SK-N-SH (cell line): ENCODE measurements at regions of chr22 and their contacts with region 1.

Region 1: DNA sequence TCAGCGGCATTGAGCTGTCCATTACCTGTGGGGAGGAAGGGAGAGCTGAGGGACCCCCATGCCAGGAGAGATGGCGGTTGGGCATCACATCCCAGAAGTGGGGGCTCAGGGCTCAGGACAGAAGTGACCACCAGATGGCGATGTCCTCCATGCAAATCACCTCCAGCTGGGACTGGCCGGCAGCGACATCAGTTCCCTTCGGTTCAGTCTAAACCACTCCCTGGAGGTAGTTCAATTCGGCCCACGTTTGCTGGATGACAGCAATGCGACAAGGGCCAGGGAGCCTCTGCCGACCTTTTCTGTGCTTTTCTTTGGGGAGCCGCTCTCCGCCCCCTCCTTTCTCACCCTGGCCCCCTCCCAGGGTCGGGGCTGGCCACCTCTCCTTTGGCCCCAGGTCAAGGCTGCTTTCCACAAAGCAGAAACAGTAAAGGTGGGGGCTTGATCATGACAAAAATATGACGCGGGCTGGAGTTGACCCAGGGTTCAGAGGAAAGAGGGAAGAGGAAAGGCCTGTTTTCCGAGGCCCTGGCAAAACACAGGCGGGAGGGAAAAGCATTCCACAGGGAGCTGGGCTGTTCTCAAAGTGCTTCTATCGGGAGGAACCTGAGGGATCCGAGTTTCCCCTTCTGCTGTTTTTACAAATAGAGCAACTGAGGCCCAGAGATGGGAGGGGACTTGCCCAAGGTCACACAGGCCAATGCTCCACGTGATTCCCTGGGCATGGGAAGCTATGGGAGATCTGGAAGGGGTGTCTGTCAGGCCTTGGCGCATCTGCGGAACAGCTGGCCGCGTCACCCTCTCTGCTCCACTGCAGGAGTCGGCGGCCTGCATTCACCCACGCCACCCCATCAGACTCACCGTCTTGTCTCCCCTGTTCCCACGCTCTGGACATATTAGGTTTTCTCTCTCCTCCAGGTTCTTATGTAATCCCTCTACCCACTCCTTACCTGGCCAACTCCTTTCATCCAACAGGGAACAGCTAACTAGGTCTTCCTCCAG is 54.7 kb downstream of the FBXO7 start:
- DNase-seq: peak; percentile 90
- H3K4me3 ChIP-seq: no peak overlapping the region
- H3K27ac ChIP-seq: no peak overlapping the region
- H3K4me1 ChIP-seq: peaks cover 10 to 14% of the 10 kb centered on the region in 2 experiments; a peak in 3 of 4 replicates
- H3K27me3 ChIP-seq: no peaks in the 10 kb centered on the region
- CTCF ChIP-seq: peak; percentile 86
- EP300 ChIP-seq: no peak
- RAD21 ChIP-seq: peak; percentile 97

Region 2: DNA sequence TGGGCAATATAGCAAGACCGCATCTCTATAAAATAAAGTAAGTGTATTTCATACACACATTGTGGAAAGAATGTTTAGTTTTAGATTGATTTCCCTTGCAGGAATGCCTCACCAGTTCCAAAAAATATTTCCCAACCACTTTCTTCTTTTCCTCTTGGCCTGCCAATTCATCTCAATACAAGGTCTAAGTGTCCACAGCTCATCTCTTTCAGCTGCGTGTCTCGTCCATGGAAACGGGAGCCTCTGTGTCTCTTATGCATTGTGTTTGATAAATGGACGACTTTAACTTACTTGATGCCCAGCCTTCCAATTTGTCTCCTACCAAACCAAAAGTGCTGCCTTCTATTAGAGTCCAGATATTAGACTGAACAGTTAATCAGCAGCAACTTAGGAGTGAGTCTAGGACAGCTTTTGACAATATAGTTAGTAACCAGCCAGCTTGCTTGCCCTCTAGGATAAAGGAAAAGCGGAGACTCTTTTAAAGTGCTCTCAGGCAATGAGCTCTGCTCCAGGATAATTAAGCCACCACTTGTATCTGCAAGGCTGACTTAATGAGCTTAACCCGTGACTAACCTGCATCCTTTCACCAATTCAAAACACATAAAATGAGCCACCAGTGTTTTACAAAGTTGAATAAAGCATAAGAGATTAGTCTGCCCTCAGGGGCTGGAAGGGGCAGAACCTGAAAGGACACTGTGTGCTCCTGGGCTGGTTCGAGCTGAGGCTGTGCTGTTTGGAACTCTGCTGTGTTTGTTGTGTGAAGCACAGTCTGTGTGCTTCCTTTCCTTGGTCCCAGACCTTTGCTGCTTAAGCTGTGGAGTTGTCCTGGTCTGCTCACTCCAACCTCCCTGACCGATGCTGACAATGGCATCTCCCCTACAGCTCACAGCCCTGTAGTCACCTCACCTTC is 27.2 kb before region 1 on chr22:
- CTCF ChIA-PET with region 1: interaction called, 12 read pairs
- POLR2A ChIA-PET with region 1: no interaction called
- DNase-seq: no peak
- H3K4me3 ChIP-seq: no peak overlapping the region
- H3K27ac ChIP-seq: no peak overlapping the region
- H3K4me1 ChIP-seq: no peaks in the 10 kb centered on the region; a peak in 1 of 4 replicates
- H3K27me3 ChIP-seq: no peaks in the 10 kb centered on the region
- CTCF ChIP-seq: no peak
- EP300 ChIP-seq: no peak
- RAD21 ChIP-seq: no peak

Region 3: GRCh38 chr22:32545801-32546200 is 16.5 kb after region 1 on chr22:
- CTCF ChIA-PET with region 1: interaction called, 14 read pairs
- POLR2A ChIA-PET with region 1: no interaction called
- DNase-seq: no peak
- H3K4me3 ChIP-seq: no peak overlapping the region
- H3K27ac ChIP-seq: no peak overlapping the region
- H3K4me1 ChIP-seq: no peaks in the 10 kb centered on the region
- H3K27me3 ChIP-seq: no peaks in the 10 kb centered on the region
- CTCF ChIP-seq: no peak
- EP300 ChIP-seq: no peak
- RAD21 ChIP-seq: no peak

Region 4: GRCh38 chr22:32775957-32776356 is 246.7 kb after region 1 on chr22:
- CTCF ChIA-PET with region 1: interaction called, 15 read pairs
- POLR2A ChIA-PET with region 1: no interaction called
- DNase-seq: peak; percentile 43
- H3K4me3 ChIP-seq: no peak overlapping the region
- H3K27ac ChIP-seq: no peak overlapping the region
- H3K4me1 ChIP-seq: no peaks in the 10 kb centered on the region; a peak in 1 of 4 replicates
- H3K27me3 ChIP-seq: no peaks in the 10 kb centered on the region
- CTCF ChIP-seq: peak; percentile 32; the same call in 1 of the 2 replicates
- EP300 ChIP-seq: no peak
- RAD21 ChIP-seq: peak; percentile 56

Region 5: GRCh38 chr22:32985899-32986765 is 456.8 kb after region 1 on chr22:
- CTCF ChIA-PET with region 1: interaction called, 241 read pairs
- POLR2A ChIA-PET with region 1: interaction called, 3 read pairs
- DNase-seq: peak; percentile 77
- H3K4me3 ChIP-seq: no peak overlapping the region; a peak in 1 of 4 replicates
- H3K27ac ChIP-seq: peak overlapping the region in 1 of 2 experiments; percentile 71; a peak in 2 of 4 replicates
- H3K4me1 ChIP-seq: peaks cover 0 to 23% of the 10 kb centered on the region in 2 experiments; a peak in 1 of 4 replicates
- H3K27me3 ChIP-seq: no peaks in the 10 kb centered on the region
- CTCF ChIP-seq: peak; percentile 72
- EP300 ChIP-seq: no peak
- RAD21 ChIP-seq: peak; percentile 96

Region 6: GRCh38 chr22:33049119-33049729 is 519.9 kb after region 1 on chr22:
- CTCF ChIA-PET with region 1: interaction called, 38 read pairs
- POLR2A ChIA-PET with region 1: no interaction called
- DNase-seq: peak; percentile 78
- H3K4me3 ChIP-seq: no peak overlapping the region; a peak in 1 of 4 replicates
- H3K27ac ChIP-seq: no peak overlapping the region
- H3K4me1 ChIP-seq: no peaks in the 10 kb centered on the region
- H3K27me3 ChIP-seq: no peaks in the 10 kb centered on the region
- CTCF ChIP-seq: peak; percentile 86
- EP300 ChIP-seq: no peak
- RAD21 ChIP-seq: peak; percentile 72